Aorta (tissue), 5 donors: ENCODE measurements at regions of chr16 and their contacts with region 1.

Region 1: GRCh38 chr16:23072084-23072599 is 77.1 kb downstream of the USP31 start:
- DNase-seq: peak; percentile 85 to 91
- ATAC-seq: peak; percentile 65
- H3K4me3 ChIP-seq: no peak overlapping the region
- H3K27ac ChIP-seq: peak overlapping the region; percentile 6 to 64
- H3K4me1 ChIP-seq: peaks cover 0 to 2% of the 10 kb centered on the region in 2 donors
- H3K27me3 ChIP-seq: no peaks in the 10 kb centered on the region

Region 2: GRCh38 chr16:23052908-23053580 is 19.1 kb before region 1 on chr16:
- intact Hi-C with region 1: no loop called
- DNase-seq: no peak
- ATAC-seq: no peak
- H3K4me3 ChIP-seq: no peak overlapping the region
- H3K27ac ChIP-seq: no peak overlapping the region
- H3K4me1 ChIP-seq: no peaks in the 10 kb centered on the region
- H3K27me3 ChIP-seq: peaks cover 0 to 3% of the 10 kb centered on the region in 2 donors

Region 3: GRCh38 chr16:23107936-23108335 is 35.8 kb after region 1 on chr16:
- intact Hi-C with region 1: loop called in 1 of 2 experiments (anchors 2 kb)
- DNase-seq: no peak
- ATAC-seq: no peak
- H3K4me3 ChIP-seq: no peak overlapping the region
- H3K27ac ChIP-seq: no peak overlapping the region
- H3K4me1 ChIP-seq: no peaks in the 10 kb centered on the region
- H3K27me3 ChIP-seq: no peaks in the 10 kb centered on the region

Region 4: GRCh38 chr16:23149349-23149996 is 77.3 kb after region 1 on chr16 and contains the start of gene USP31:
- intact Hi-C with region 1: loop called (anchors 1 to 5 kb)
- DNase-seq: peak; percentile 97 to 99
- ATAC-seq: peak; percentile 98
- H3K4me3 ChIP-seq: peak within 1 kb of the TSS; percentile 74 to 98
- H3K27ac ChIP-seq: peak within 1 kb of the TSS; percentile 51 to 69
- H3K4me1 ChIP-seq: no peaks in the 10 kb centered on the region
- H3K27me3 ChIP-seq: no peaks in the 10 kb centered on the region
- total RNA-seq, gene USP31: 19.6 to 24.6 TPM